ENCODE measurements at regions of chr15 and their contacts with region 1.

Region 1: GRCh38 chr15:84929744-84930371 is 45.4 kb downstream of the SLC28A1 start:
- DNase-seq: peak; percentile 57 to 83 (median 74)
- H3K4me3 ChIP-seq: no peak overlapping the region
- H3K27ac ChIP-seq: peak overlapping the region in 2 of 5 donors; percentile 26 to 32
- H3K4me1 ChIP-seq: peaks cover 8 to 9% of the 10 kb centered on the region in 2 donors
- H3K27me3 ChIP-seq: no peaks in the 10 kb centered on the region
- CTCF ChIP-seq: no peak
- POLR2A ChIP-seq: no peak

Region 2: GRCh38 chr15:84598969-84599368 is 330.9 kb before region 1 on chr15:
- intact Hi-C with region 1: loop called in 1 of 2 experiments (anchors 10 kb)
- DNase-seq: peak in 6 of 7 donors; percentile 58 to 76 (median 65)
- H3K4me3 ChIP-seq: no peak overlapping the region
- H3K27ac ChIP-seq: peak overlapping the region in 1 of 5 donors; percentile 32
- H3K4me1 ChIP-seq: peaks cover 3 to 37% of the 10 kb centered on the region in 2 donors
- H3K27me3 ChIP-seq: no peaks in the 10 kb centered on the region
- CTCF ChIP-seq: peak; percentile 58 to 79 (median 72)
- POLR2A ChIP-seq: no peak

Region 3: GRCh38 chr15:84716036-84716799 is 213.6 kb before region 1 on chr15 and contains the start of gene SEC11A:
- intact Hi-C with region 1: loop called in 1 of 2 experiments (anchors 10 kb)
- DNase-seq: peak; percentile 94 to 97 (median 96)
- H3K4me3 ChIP-seq: peak within 1 kb of the TSS; percentile 49 to 82 (median 58)
- H3K27ac ChIP-seq: peak within 1 kb of the TSS; percentile 87 to 97 (median 90)
- H3K4me1 ChIP-seq: peaks cover 8 to 31% of the 10 kb centered on the region in 2 donors
- H3K27me3 ChIP-seq: no peaks in the 10 kb centered on the region
- CTCF ChIP-seq: peak in 1 of 6 experiments; percentile 4
- POLR2A ChIP-seq: peak; percentile 72 to 93
- total RNA-seq, gene SEC11A: 130 to 194 (median 168) TPM

Region 4: GRCh38 chr15:84863565-84864443 is 66.1 kb before region 1 on chr15:
- intact Hi-C with region 1: loop called in 1 of 2 experiments (anchors 10 kb)
- DNase-seq: no peak
- H3K4me3 ChIP-seq: no peak overlapping the region
- H3K27ac ChIP-seq: no peak overlapping the region
- H3K4me1 ChIP-seq: no peaks in the 10 kb centered on the region
- H3K27me3 ChIP-seq: no peaks in the 10 kb centered on the region
- CTCF ChIP-seq: peak in 4 of 6 experiments; percentile 15 to 35 (median 28)
- POLR2A ChIP-seq: no peak

Region 5: DNA sequence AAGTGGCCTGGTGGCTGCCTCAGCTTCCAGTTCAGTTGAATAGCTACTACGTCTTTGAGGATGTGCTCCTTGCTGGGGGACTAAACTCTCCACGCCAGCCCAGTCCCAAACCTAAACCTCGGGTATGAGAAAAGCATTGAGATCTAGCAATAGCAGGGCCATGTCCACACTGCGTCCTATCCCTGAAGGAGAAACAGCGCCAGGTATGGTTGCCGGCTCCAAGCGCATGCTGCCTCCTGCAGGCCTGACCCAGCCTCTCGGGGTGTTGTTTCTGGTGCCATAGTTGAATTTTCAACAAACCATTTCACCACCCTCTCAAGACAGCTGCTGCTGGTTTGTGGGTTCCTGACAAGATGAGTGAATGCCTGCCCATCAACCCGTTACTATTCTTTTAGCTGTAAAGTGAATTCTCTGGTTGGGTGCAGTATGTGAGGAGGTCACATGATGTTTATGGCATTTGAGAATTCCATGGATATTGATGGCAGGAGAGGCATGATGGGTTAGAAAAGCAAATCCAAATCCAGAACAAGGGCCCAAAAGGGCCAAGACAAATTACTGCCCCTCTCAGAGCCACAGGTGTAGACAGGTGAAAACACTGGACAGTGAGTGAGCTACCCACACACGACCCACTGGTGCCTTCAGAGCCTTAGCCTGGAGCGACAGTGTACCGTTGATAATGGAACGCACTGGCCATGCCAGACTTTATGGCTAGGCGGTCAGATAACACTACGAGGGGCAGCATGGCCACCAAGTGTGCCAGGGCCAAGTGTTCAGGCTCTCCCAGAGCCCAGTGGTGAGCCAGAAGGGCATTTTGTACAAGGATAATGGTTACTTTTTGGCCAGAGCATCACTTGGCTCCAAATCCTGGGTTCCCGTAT is 58.2 kb before region 1 on chr15:
- intact Hi-C with region 1: loop called (anchors 10 kb)
- DNase-seq: no peak
- H3K4me3 ChIP-seq: no peak overlapping the region
- H3K27ac ChIP-seq: peak overlapping the region in 3 of 5 donors; percentile 11 to 74 (median 46)
- H3K4me1 ChIP-seq: peaks cover 4% of the 10 kb centered on the region in 2 donors
- H3K27me3 ChIP-seq: no peaks in the 10 kb centered on the region
- CTCF ChIP-seq: no peak
- POLR2A ChIP-seq: no peak

Region 6: GRCh38 chr15:84992157-84992944 is 62.5 kb after region 1 on chr15:
- intact Hi-C with region 1: no loop called
- DNase-seq: peak in 2 of 7 donors; percentile 32 to 75
- H3K4me3 ChIP-seq: no peak overlapping the region
- H3K27ac ChIP-seq: peak overlapping the region in 3 of 5 donors; percentile 43 to 79 (median 57)
- H3K4me1 ChIP-seq: peaks cover 3 to 52% of the 10 kb centered on the region in 2 donors
- H3K27me3 ChIP-seq: no peaks in the 10 kb centered on the region
- CTCF ChIP-seq: no peak
- POLR2A ChIP-seq: no peak

Measured in adrenal gland (tissue), 19 donors.